H1 (cell line): ENCODE measurements at regions of chr10 and their contacts with region 1.

Region 1: DNA sequence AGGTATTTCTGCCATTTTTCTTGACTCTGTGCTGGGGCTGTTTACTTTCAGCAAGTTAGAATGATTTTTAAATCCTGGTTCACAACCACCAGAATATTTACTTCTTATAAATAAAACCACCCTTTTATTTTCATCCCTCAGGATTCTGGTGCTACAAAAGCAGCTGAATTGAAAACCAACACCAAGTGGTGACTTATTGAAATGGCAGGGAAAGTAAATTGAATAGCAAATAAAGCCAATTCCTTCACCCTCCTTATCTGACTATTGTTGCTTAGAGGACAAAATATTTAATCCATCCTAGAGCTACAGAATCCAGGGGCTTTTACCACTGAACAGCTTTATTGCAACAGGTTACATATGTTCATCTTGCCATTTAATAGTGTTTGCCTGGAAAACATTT is 828.6 kb upstream of the GHITM start:
- DNase-seq: no peak
- H3K4me3 ChIP-seq: no peak overlapping the region
- H3K27ac ChIP-seq: no peak overlapping the region
- H3K4me1 ChIP-seq: no peaks in the 10 kb centered on the region
- H3K27me3 ChIP-seq: no peaks in the 10 kb centered on the region
- CTCF ChIP-seq: peak in 1 of 3 experiments; percentile 15; a peak in 1 of 4 replicates
- EP300 ChIP-seq: no peak
- POLR2A ChIP-seq: no peak
- RAD21 ChIP-seq: peak in 1 of 2 experiments; percentile 7; a peak in 2 of 4 replicates

Region 2: DNA sequence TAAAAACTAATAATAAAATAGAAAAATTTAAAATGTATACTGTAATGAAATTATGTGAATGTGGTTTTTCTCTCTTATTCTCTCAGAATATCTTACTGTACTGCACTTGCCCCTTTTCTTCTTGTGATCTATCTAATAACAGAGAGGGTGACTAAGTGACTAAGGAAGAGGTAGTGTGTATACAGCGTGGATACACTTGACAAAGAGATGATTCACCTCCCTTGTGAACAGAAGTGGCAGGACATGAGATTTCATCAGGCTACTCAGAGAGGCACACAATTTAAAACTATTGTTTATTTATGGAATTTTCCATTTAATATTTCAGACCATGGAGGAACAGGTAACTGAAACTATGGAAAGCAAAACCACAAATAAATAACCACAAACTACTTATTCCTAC is 22.0 kb after region 1 on chr10:
- CTCF ChIA-PET with region 1: interaction called, 11 read pairs
- POLR2A ChIA-PET with region 1: no interaction called
- DNase-seq: no peak
- H3K4me3 ChIP-seq: no peak overlapping the region
- H3K27ac ChIP-seq: no peak overlapping the region
- H3K4me1 ChIP-seq: no peaks in the 10 kb centered on the region
- H3K27me3 ChIP-seq: no peaks in the 10 kb centered on the region
- CTCF ChIP-seq: no peak
- EP300 ChIP-seq: no peak
- POLR2A ChIP-seq: no peak
- RAD21 ChIP-seq: no peak